Left cardiac atrium (tissue), 4 donors: ENCODE measurements at regions of chr12 and their contacts with region 1.

Region 1: DNA sequence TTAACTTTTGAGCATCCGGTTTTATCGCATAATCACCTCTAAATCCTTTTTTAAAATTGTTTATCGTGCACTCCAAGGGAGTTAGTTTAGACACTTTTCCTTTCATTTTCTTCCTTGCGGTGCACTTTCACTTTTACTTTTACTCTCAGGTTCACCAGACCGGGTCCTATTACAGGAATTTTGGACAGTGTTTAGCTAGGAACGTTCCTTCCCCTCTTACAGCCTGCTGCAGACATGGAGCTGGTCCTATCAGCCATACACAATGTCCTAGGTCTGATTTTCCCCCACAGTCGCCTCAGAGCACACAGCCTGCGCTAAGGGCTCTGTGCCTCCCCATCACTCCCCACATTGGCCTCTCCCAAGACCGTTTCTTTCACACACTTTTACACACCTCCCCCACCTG is 103.9 kb downstream of the ALG10 start:
- DNase-seq: no peak
- ATAC-seq: no peak

Region 2: GRCh38 chr12:34218165-34219045 is 92.2 kb after region 1 on chr12:
- intact Hi-C with region 1: loop called (anchors 2 to 5 kb)
- DNase-seq: peak; percentile 75
- ATAC-seq: peak; percentile 75 to 81